ENCODE measurements at regions of chr3 and their contacts with region 1.

Region 1: GRCh38 chr3:47164007-47164881 is at the start of gene SETD2:
- DNase-seq: peak; percentile 92
- ATAC-seq: peak; percentile 88
- H3K4me3 Mint-ChIP-seq: peak within 1 kb of the TSS; percentile 90
- H3K27ac Mint-ChIP-seq: peak within 1 kb of the TSS; percentile 97
- H3K4me1 Mint-ChIP-seq: peaks cover 38% of the 10 kb centered on the region
- H3K27me3 Mint-ChIP-seq: no peaks in the 10 kb centered on the region
- CTCF ChIP-seq: peak; percentile 51
- total RNA-seq, gene SETD2: 34.7 to 36.1 TPM

Region 2: DNA sequence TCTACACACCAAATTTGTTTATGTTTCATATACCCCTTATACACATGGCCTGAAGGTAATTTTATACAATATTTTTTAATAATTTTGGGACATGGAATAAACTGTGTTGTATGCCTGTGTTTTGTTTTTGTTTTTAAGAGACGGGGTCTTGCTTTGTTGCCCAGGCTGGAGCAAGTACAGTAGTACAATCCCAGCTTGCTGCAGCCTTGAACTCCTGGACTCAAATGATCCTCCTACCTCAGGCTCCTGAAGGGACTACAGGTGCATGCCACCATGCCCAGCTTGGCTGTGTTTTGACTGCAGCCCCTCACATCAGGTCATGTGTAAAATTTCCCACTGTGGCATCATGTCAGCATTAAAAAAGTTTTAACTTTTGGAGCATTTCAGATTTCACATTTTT is 19.0 kb before region 1 on chr3:
- CTCF ChIA-PET with region 1: interaction called, 3 read pairs
- POLR2A ChIA-PET with region 1: interaction called, 16 read pairs
- intact Hi-C with region 1: no loop called
- DNase-seq: no peak
- ATAC-seq: no peak
- H3K4me3 Mint-ChIP-seq: no peak overlapping the region
- H3K27ac Mint-ChIP-seq: no peak overlapping the region
- H3K4me1 Mint-ChIP-seq: peaks cover 50% of the 10 kb centered on the region
- H3K27me3 Mint-ChIP-seq: no peaks in the 10 kb centered on the region
- CTCF ChIP-seq: no peak

Region 3: GRCh38 chr3:47186285-47186684 is 22.0 kb after region 1 on chr3:
- CTCF ChIA-PET with region 1: no interaction called
- POLR2A ChIA-PET with region 1: no interaction called
- intact Hi-C with region 1: no loop called
- DNase-seq: no peak
- ATAC-seq: no peak
- H3K4me3 Mint-ChIP-seq: no peak overlapping the region
- H3K27ac Mint-ChIP-seq: no peak overlapping the region
- H3K4me1 Mint-ChIP-seq: no peaks in the 10 kb centered on the region
- H3K27me3 Mint-ChIP-seq: no peaks in the 10 kb centered on the region
- CTCF ChIP-seq: no peak

Region 4: DNA sequence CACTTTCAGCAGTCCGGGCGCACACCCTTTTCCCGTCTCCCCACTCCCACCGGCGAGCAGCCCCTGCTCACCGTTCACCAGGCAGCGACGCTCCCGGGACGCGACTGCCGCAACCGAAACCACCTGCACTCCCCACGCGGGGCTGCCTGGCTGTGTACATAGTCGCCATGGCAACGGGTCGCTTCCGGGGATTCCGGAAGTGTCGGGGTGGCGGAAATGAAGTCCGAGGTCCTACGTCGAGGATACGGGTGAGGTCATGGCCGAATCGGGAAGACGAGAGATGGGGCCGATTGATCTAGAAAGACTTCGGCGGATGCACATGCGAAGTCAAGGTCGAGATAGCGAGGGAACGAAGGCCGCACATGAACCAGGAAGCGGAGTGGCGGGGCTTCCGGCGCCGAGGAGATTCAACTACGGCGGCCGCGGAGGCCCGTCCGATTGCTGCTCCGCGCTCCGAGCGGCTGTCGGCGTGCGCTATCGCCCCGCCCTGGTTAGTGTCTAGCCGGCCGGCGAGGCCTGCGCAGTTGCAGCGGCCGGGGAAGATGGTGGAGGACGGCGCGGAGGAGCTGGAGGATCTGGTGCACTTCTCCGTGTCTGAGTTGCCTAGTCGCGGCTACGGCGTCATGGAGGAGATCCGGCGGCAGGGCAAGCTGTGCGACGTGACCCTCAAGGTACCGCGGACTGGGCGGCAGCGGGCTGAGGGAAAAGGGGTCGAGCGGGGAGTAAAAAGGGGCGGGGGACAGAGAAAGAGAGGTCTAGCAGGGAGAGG is 118.4 kb after region 1 on chr3 and contains the starts of genes KIF9 and KLHL18:
- CTCF ChIA-PET with region 1: interaction called, 10 read pairs
- POLR2A ChIA-PET with region 1: interaction called, 6 read pairs
- intact Hi-C with region 1: no loop called
- DNase-seq: peak; percentile 97
- ATAC-seq: peak; percentile 92
- H3K4me3 Mint-ChIP-seq: peak within 1 kb of the TSS; percentile 98
- H3K27ac Mint-ChIP-seq: peak within 1 kb of the TSS; percentile 100
- H3K4me1 Mint-ChIP-seq: peaks cover 33% of the 10 kb centered on the region
- H3K27me3 Mint-ChIP-seq: no peaks in the 10 kb centered on the region
- CTCF ChIP-seq: no peak
- total RNA-seq, gene KIF9: 8.3 to 8.8 TPM
- total RNA-seq, gene KLHL18: 28.8 to 32.6 TPM